ENCODE measurements at regions of chr1 and their contacts with region 1.

Region 1: DNA sequence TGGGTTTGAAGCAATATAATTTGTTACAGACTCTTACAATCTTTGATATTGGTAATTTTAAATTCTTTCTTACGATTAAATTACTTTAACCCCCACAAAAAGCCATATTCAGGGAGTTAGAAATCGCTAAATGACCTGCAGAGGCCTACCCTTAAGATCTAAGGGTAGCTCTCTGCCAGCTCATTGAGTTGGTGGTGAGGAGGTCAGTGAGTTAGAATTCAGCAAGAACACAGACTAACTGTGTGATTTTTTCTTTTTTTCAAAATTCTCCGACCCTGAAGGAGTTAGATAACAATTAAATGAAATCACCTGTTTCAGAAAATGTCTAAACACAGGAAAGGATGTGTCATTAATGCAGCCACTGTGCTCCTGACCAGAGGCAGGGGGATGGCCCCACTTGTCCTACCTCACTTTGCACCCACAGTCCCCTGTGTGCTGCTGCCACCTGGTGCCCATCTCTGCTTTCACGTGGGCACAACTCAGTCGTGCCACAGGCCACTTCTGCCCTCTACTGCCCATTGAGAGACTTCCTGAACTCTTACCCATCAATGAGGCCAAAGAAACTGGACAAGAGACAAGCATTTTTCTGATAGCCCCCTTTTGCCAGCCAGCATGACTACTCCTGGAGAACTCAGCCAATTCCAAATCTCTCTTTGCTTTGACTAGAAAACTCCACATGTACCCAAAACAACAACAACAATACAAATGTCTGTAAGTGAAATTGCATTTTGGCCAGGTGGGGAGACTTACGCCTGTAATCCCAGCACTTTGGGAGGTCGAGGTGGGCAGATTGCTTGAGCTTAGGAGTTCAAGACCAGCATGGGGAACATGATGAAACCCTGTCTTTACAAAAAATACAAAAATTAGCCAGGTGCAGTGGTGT is 8.4 kb downstream of the CFAP45 start:
- DNase-seq: peak; percentile 58
- H3K4me3 ChIP-seq: no peak overlapping the region
- CTCF ChIP-seq: peak; percentile 99

Region 2: GRCh38 chr1:158600735-158601134 is 1290.8 kb before region 1 on chr1:
- CTCF ChIA-PET with region 1: no interaction called
- POLR2A ChIA-PET with region 1: no interaction called
- DNase-seq: no peak
- H3K4me3 ChIP-seq: no peak overlapping the region
- CTCF ChIP-seq: no peak

Region 3: DNA sequence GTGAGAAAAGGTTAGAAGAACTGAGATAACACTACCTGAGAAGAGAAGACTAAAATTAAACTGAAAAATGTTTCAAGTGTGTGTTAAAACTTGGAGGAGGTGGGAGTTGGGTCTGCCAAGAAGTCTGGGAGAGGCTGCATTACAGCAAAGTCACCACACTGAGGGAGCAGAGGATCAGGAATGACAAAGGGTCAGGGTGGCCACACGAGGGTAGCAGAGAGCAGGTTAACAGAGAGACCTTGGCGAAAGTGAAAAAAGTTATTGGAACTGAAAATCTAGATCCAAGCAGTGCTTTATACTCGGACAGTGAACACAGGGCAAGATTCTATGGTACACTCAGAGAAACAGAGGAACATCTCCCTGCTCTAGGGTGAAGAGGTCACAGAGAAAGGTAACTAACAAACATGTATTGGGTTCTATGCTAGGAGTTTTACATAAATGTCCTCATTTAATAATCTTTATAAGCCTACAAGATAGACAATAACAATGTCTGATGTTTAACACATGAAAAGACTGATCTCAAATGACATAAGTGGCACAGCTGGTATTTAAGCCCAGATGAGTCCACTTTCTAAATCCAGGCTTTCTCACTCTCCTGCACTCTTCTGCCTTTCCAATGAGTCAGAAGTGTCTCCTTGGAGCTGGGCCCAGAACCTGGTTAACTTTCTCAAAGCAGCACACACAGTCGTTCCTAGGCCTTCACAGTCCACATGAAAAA is 730.4 kb before region 1 on chr1:
- CTCF ChIA-PET with region 1: interaction called, 59 read pairs
- POLR2A ChIA-PET with region 1: no interaction called
- DNase-seq: peak; percentile 63
- H3K4me3 ChIP-seq: peak overlapping the region; percentile 28; the same call in 1 of the 2 replicates
- CTCF ChIP-seq: peak; percentile 96

Region 4: GRCh38 chr1:159188375-159188788 is 703.1 kb before region 1 on chr1:
- CTCF ChIA-PET with region 1: no interaction called
- POLR2A ChIA-PET with region 1: no interaction called
- DNase-seq: no peak
- H3K4me3 ChIP-seq: no peak overlapping the region
- CTCF ChIP-seq: no peak

Region 5: DNA sequence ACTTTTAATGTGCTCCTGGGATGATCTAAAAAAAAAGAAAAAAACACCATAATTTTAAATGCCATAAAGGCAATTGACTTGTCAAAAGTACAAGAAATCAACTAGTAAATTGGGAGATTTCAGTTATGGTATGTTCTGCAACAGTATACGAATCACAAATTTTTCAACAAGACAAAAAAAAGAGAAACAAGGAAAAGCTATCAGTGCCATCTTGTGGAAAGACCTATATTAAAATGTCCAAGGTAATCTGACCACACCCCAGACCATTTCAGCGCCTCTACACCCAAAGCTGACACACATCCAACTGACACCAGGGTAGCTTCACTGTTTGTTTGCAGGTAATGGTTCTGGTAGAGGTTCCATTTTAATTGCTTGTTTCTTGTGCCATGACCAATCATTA is 115.8 kb before region 1 on chr1:
- CTCF ChIA-PET with region 1: interaction called, 201 read pairs
- POLR2A ChIA-PET with region 1: no interaction called
- DNase-seq: no peak
- H3K4me3 ChIP-seq: no peak overlapping the region
- CTCF ChIP-seq: no peak

Region 6: GRCh38 chr1:159804924-159805323 is 86.6 kb before region 1 on chr1:
- CTCF ChIA-PET with region 1: interaction called, 1,007 read pairs
- POLR2A ChIA-PET with region 1: interaction called, 3 read pairs
- DNase-seq: no peak
- H3K4me3 ChIP-seq: no peak overlapping the region
- CTCF ChIP-seq: no peak

Region 7: DNA sequence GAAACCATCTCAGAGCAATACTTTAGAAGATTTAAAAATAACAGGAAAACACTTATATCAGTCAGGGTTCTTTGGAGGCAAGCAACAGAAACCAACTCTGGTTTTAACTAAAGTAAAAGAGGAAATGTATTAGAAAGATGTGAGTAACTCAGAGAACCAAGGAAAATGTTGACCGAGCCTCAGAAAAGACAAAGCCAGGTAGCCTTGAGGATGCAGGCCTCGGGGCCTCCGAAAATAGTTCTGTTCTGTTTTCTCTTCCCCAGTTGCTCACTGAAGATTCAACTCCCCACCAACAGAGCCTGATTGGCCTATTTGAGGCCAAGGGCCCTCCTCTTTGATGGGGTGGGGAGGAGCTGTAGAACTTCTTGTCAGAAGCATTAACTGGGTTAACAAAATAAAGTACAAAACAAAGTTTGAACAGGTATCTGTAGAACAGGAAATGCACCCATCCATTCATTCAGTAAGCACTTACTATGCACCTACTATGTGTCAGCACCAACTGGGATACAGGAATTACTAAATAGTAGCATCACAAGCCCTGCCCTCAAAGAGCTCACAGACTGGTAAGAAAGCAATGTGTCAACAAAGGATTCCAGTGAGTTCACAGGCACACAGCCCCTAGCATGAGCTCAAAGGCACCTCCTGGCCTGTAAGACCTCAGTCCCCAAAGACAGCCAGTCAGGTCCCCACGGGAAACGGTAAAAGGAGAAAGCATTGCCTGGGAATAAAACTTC is 52.2 kb before region 1 on chr1:
- CTCF ChIA-PET with region 1: interaction called, 207 read pairs
- POLR2A ChIA-PET with region 1: no interaction called
- DNase-seq: no peak
- H3K4me3 ChIP-seq: no peak overlapping the region
- CTCF ChIP-seq: no peak

Region 8: DNA sequence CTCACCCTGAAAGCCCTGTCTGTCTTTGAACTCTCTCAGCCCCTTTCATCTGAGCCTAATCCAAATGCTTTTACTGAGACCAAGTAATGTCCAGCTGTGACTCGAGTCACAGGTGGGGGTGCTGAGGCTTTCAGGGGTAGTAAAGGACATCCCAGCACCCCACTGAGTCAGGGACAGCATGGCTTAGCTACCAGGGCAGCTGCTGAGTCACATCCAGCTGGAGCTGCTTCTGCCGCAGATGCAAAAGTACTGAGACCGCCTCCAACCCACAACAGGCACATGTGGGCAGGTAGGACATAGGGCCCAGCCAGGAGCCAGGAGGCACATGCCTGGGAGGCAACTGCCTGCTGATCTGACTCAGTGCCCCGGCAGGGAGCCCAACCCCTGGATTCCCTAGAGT is 22.3 kb before region 1 on chr1:
- CTCF ChIA-PET with region 1: interaction called, 25 read pairs
- POLR2A ChIA-PET with region 1: no interaction called
- DNase-seq: no peak
- H3K4me3 ChIP-seq: no peak overlapping the region
- CTCF ChIP-seq: no peak